H1 (cell line): ENCODE measurements at regions of chr4 and their contacts with region 1.

Region 1: DNA sequence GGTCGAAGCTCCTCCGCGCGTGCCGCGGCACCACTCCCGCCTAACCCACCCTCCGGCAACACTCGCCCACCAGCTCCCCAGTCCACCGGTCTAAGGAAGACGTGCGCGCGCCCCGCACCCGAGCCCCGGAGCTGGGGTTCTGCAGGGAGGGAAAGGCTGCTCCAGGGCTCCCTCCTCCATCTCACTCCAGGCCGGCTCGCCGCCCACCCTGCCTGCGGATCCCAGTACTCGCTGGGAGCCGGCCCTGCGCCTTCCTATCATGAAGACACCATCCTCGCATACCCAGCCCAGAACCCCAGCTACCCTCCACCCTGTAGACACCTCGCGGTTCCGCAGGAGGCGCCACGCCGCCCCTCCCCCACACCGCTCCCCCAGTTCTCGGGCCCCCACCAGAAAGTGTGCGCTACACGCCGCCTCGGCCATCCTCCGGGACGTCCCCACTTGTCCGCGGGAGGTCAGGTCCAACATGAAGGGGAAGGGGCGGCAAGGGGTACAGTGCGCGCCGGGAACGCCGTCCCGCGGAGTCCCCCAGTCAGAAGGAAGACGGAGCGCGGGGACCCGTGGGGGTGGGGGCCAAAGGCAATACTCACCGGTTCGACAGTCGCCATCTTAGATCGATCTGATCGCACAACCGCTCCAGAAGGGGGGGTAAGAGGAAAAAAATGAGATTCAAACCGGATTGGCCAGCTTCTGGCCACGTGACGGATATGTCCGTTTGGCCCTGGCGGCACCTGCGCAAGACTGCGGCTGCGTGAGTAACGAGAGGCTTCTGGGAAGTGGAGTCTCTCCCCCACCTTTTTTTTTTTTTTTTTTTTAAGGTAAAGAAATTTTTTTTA is at the start of gene EIF4E:
- DNase-seq: peak; percentile 90 to 96
- H3K4me3 ChIP-seq: peak within 1 kb of the TSS; percentile 94 to 98 (median 98)
- H3K27ac ChIP-seq: peak within 1 kb of the TSS; percentile 91
- H3K4me1 ChIP-seq: peaks cover 0 to 2% (median 0%) of the 10 kb centered on the region in 4 experiments; a peak in 1 of 7 replicates
- H3K27me3 ChIP-seq: no peaks in the 10 kb centered on the region
- CTCF ChIP-seq: peak in 1 of 3 experiments; percentile 1; a peak in 2 of 4 replicates
- EP300 ChIP-seq: no peak
- POLR2A ChIP-seq: peak; percentile 42 to 59
- RAD21 ChIP-seq: no peak
- total RNA-seq, gene EIF4E: 185 and 210 TPM in 2 replicates

Region 2: GRCh38 chr4:98794565-98795205 is 134.0 kb before region 1 on chr4:
- CTCF ChIA-PET with region 1: no interaction called
- POLR2A ChIA-PET with region 1: no interaction called
- DNase-seq: peak in 1 of 2 experiments; percentile 15
- H3K4me3 ChIP-seq: no peak overlapping the region
- H3K27ac ChIP-seq: no peak overlapping the region
- H3K4me1 ChIP-seq: peaks cover 0 to 8% (median 2%) of the 10 kb centered on the region in 4 experiments; a peak in 2 of 7 replicates
- H3K27me3 ChIP-seq: no peaks in the 10 kb centered on the region
- CTCF ChIP-seq: no peak
- EP300 ChIP-seq: no peak
- POLR2A ChIP-seq: no peak
- RAD21 ChIP-seq: no peak

Region 3: GRCh38 chr4:98873059-98873458 is 55.7 kb before region 1 on chr4:
- CTCF ChIA-PET with region 1: no interaction called
- POLR2A ChIA-PET with region 1: interaction called, 11 read pairs
- DNase-seq: no peak
- H3K4me3 ChIP-seq: no peak overlapping the region
- H3K27ac ChIP-seq: no peak overlapping the region
- H3K4me1 ChIP-seq: no peaks in the 10 kb centered on the region
- H3K27me3 ChIP-seq: no peaks in the 10 kb centered on the region
- CTCF ChIP-seq: no peak
- EP300 ChIP-seq: no peak
- POLR2A ChIP-seq: no peak
- RAD21 ChIP-seq: no peak

Region 4: GRCh38 chr4:98908182-98908581 is 20.5 kb before region 1 on chr4:
- CTCF ChIA-PET with region 1: interaction called, 3 read pairs
- POLR2A ChIA-PET with region 1: interaction called, 51 read pairs
- DNase-seq: no peak
- H3K4me3 ChIP-seq: no peak overlapping the region
- H3K27ac ChIP-seq: no peak overlapping the region
- H3K4me1 ChIP-seq: peaks cover 0 to 9% (median 3%) of the 10 kb centered on the region in 4 experiments; a peak in 3 of 7 replicates
- H3K27me3 ChIP-seq: no peaks in the 10 kb centered on the region
- CTCF ChIP-seq: no peak
- EP300 ChIP-seq: no peak
- POLR2A ChIP-seq: no peak
- RAD21 ChIP-seq: no peak

Region 5: DNA sequence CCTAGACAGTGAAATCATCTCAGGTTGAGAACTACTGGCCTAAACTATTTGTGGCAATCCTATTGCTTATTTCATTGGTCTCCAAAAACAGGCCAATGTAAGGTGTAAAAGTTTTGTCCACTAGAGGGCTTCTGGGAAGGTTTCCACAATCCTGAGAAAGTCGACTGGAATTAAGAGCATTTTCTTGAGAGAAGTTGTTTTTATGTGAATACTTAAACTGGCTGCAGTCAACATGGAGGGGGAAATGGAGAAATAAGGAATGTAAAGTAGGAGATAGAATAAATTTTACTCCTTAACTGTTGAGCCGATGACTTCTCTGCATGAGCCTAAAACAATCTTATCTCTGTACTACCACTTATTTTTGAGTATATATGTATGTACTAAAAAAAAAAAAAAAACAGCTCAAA is 11.2 kb after region 1 on chr4:
- CTCF ChIA-PET with region 1: interaction called, 9 read pairs
- POLR2A ChIA-PET with region 1: interaction called, 20 read pairs
- DNase-seq: no peak
- H3K4me3 ChIP-seq: no peak overlapping the region
- H3K27ac ChIP-seq: no peak overlapping the region
- H3K4me1 ChIP-seq: peaks cover 0 to 8% (median 2%) of the 10 kb centered on the region in 4 experiments; a peak in 3 of 7 replicates
- H3K27me3 ChIP-seq: no peaks in the 10 kb centered on the region
- CTCF ChIP-seq: peak in 2 of 3 experiments; percentile 58 to 76; a peak in 3 of 4 replicates
- EP300 ChIP-seq: no peak
- POLR2A ChIP-seq: no peak
- RAD21 ChIP-seq: peak; percentile 53 to 60

Region 6: DNA sequence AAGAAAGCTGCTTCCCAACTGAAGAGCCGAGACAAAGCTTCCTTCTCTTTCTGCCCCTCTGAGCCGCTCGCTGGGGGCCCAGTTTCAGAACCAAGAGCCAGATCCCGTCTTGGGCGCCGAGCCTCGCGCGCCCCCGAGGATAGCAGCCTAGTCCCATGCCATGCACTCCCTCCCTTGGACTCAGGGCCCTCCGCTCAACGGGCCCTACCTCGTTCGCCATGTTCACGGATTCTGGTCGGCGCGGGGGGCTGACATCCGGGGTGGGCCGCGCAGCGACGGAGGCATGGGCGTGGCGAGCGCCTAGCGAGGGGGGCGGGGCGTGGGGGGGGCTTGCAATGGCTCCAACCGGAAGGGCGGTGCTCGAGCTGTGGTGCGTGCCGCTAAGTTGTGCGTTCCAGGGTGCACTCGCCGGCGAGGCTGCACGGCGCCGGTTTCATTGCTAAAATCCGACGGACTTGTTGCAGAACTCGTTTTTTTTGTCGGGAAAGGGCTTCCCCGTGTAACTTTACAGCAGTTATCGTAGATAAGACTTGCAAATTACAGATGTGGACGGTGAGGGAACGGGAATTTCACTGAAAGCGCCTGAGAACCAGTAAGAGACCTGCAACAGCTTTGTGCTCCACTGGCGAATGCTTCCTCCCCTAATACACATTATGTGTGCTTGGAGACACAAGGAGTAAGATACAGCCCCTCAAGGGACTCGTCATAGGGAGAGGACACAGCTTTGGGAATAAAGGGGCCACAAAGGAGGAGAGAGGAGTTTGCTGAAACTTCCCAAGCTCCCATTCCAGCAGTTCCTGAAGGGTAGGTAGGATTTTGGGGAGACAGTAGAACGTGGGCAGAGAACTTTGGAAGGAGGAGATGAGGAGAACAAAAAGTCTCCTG is 160.0 kb after region 1 on chr4 and contains the start of gene ADH5:
- CTCF ChIA-PET with region 1: no interaction called
- POLR2A ChIA-PET with region 1: interaction called, 14 read pairs
- DNase-seq: peak; percentile 44 to 84
- H3K4me3 ChIP-seq: peak within 1 kb of the TSS; percentile 63 to 94 (median 82)
- H3K27ac ChIP-seq: peak within 1 kb of the TSS; percentile 93
- H3K4me1 ChIP-seq: peaks cover 0 to 4% (median 1%) of the 10 kb centered on the region in 4 experiments; a peak in 1 of 7 replicates
- H3K27me3 ChIP-seq: no peaks in the 10 kb centered on the region
- CTCF ChIP-seq: no peak
- EP300 ChIP-seq: no peak
- POLR2A ChIP-seq: peak; percentile 88 to 92
- RAD21 ChIP-seq: 0 out of 4 replicates have a peak, but pooled peaks of 1 of the 2 experiments have one; percentile 3
- total RNA-seq, gene ADH5: 322 and 327 TPM in 2 replicates